Activated T-helper 2 cell treated with anti-CD3 and anti-CD28 coated beads, Interferon-gamma antibody, Interleukin-2, Interleukin-4, amounts not matched to agents 10 μg/mL and 5 μg/mL and 100 μg/mL, durations not matched to agents 14 hours and 24 hours and 36 hours (primary cell): ENCODE measurements at regions of chr9 and their contacts with region 1.

Region 1: GRCh38 chr9:110217656-110218099 is 9.7 kb upstream of the C9orf152 start:
- DNase-seq: no peak
- H3K4me3 Mint-ChIP-seq: no peak overlapping the region
- H3K27ac Mint-ChIP-seq: no peak overlapping the region
- H3K4me1 Mint-ChIP-seq: peaks cover 6% of the 10 kb centered on the region
- H3K27me3 Mint-ChIP-seq: peaks cover 37% of the 10 kb centered on the region

Region 2: GRCh38 chr9:109574068-109574882 is 643.4 kb before region 1 on chr9:
- intact Hi-C with region 1: loop called (anchors 1 kb)
- DNase-seq: no peak
- H3K4me3 Mint-ChIP-seq: no peak overlapping the region
- H3K27ac Mint-ChIP-seq: no peak overlapping the region
- H3K4me1 Mint-ChIP-seq: no peaks in the 10 kb centered on the region
- H3K27me3 Mint-ChIP-seq: peaks cover 25% of the 10 kb centered on the region

Region 3: DNA sequence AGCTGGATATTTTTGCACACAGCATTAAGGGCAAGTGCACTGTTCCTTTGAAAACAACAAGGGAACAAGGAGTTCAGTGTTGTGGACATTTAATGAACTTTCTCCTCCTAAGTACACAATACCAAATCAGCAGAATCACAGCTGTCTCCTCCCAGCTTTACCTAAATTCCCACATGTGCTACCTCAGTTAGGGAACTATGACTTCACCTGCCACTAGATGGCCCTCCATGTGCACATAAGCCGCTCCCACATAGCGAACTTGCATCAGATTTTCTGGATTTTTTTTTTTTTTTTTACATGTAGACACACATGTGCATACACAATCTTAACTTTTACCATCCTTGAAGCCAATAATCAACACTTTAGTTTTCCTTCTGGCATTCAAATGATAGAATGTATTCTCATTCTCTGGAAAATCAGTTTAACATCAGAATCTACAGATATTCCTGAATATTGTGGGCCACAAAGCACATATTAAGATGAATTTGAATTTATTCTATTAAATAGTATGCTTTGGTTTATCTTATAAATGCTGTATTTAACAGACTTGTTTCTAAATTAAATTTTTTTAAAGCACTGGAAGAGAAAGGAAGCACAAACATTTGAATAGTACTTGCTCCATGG is 314.1 kb before region 1 on chr9:
- intact Hi-C with region 1: loop called (anchors 5 kb)
- DNase-seq: peak; percentile 59
- H3K4me3 Mint-ChIP-seq: no peak overlapping the region
- H3K27ac Mint-ChIP-seq: no peak overlapping the region
- H3K4me1 Mint-ChIP-seq: peaks cover 29% of the 10 kb centered on the region
- H3K27me3 Mint-ChIP-seq: no peaks in the 10 kb centered on the region

Region 4: GRCh38 chr9:110183208-110184145 is 34.2 kb before region 1 on chr9:
- intact Hi-C with region 1: loop called (anchors 1 kb)
- DNase-seq: peak; percentile 28
- H3K4me3 Mint-ChIP-seq: no peak overlapping the region
- H3K27ac Mint-ChIP-seq: no peak overlapping the region
- H3K4me1 Mint-ChIP-seq: peaks cover 15% of the 10 kb centered on the region
- H3K27me3 Mint-ChIP-seq: no peaks in the 10 kb centered on the region

Region 5: GRCh38 chr9:110258690-110259091 is 41.0 kb after region 1 on chr9:
- intact Hi-C with region 1: no loop called
- DNase-seq: no peak
- H3K4me3 Mint-ChIP-seq: peak overlapping the region; percentile 18
- H3K27ac Mint-ChIP-seq: peak overlapping the region; percentile 76
- H3K4me1 Mint-ChIP-seq: peaks cover 33% of the 10 kb centered on the region
- H3K27me3 Mint-ChIP-seq: peaks cover 10% of the 10 kb centered on the region